Activated B cell treated with CpG ODN at 0.5 μM for 24 hours (primary cell): ENCODE measurements at regions of chrX and their contacts with region 1.

Region 1: GRCh38 chrX:153590961-153591956 is 7.7 kb downstream of the CCNQ start:
- DNase-seq: peak; percentile 51
- ATAC-seq: peak; percentile 95
- H3K4me3 Mint-ChIP-seq: no peak overlapping the region
- H3K27ac Mint-ChIP-seq: peak overlapping the region; percentile 83
- H3K4me1 Mint-ChIP-seq: peaks cover 31% of the 10 kb centered on the region
- H3K27me3 Mint-ChIP-seq: no peaks in the 10 kb centered on the region
- CTCF ChIP-seq: no peak

Region 2: DNA sequence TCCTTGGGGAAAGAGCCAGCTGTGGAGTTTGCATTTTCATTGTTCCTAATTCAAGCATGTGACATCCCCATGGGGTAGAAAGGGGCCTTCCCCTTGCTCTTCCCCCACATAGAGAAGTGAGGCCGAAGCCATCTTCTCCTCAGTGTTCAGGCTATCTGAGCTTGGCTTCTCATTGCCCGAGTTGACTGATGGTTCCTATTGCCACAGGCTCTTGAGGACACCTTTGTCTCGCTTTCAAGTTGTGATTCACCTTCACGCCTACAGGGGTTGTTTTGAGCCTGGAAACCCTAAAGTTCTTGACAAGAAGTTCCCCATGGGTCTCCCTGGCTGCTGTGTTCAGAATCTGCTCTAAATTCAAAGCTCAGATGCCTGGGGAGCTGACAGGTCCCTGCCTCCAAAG is 17.3 kb before region 1 on chrX:
- CTCF ChIA-PET with region 1: no interaction called
- POLR2A ChIA-PET with region 1: no interaction called
- intact Hi-C with region 1: loop called (anchors 1 kb)
- DNase-seq: no peak
- ATAC-seq: peak; percentile 71
- H3K4me3 Mint-ChIP-seq: no peak overlapping the region
- H3K27ac Mint-ChIP-seq: no peak overlapping the region
- H3K4me1 Mint-ChIP-seq: peaks cover 8% of the 10 kb centered on the region
- H3K27me3 Mint-ChIP-seq: no peaks in the 10 kb centered on the region
- CTCF ChIP-seq: no peak